B cell (primary cell): ENCODE measurements at regions of chr2 and their contacts with region 1.

Region 1: GRCh38 chr2:134282629-134283400 is 28.9 kb downstream of the MGAT5 start:
- DNase-seq: peak; percentile 56
- ATAC-seq: peak; percentile 64
- H3K4me3 ChIP-seq: peak overlapping the region in 1 of 5 experiments; percentile 40
- H3K4me3 Mint-ChIP-seq: peak overlapping the region; percentile 77
- H3K27ac ChIP-seq: peak overlapping the region; percentile 56 to 80
- H3K27ac Mint-ChIP-seq: peak overlapping the region; percentile 88
- H3K4me1 ChIP-seq: peaks cover 95 to 100% of the 10 kb centered on the region in 2 donors
- H3K4me1 Mint-ChIP-seq: peaks cover 78% of the 10 kb centered on the region
- H3K27me3 ChIP-seq: no peaks in the 10 kb centered on the region
- H3K27me3 Mint-ChIP-seq: no peaks in the 10 kb centered on the region
- CTCF ChIP-seq: no peak

Region 2: GRCh38 chr2:134268265-134268664 is 14.6 kb before region 1 on chr2:
- CTCF ChIA-PET with region 1: interaction called, 17 read pairs
- POLR2A ChIA-PET with region 1: no interaction called
- intact Hi-C with region 1: no loop called
- DNase-seq: no peak
- ATAC-seq: no peak
- H3K4me3 ChIP-seq: no peak overlapping the region
- H3K4me3 Mint-ChIP-seq: peak overlapping the region; percentile 69
- H3K27ac ChIP-seq: peak overlapping the region; percentile 51 to 80
- H3K27ac Mint-ChIP-seq: peak overlapping the region; percentile 89
- H3K4me1 ChIP-seq: peaks cover 92 to 93% of the 10 kb centered on the region in 2 donors
- H3K4me1 Mint-ChIP-seq: peaks cover 86% of the 10 kb centered on the region
- H3K27me3 ChIP-seq: no peaks in the 10 kb centered on the region
- H3K27me3 Mint-ChIP-seq: no peaks in the 10 kb centered on the region
- CTCF ChIP-seq: no peak

Region 3: GRCh38 chr2:134314681-134315368 is 32.0 kb after region 1 on chr2:
- CTCF ChIA-PET with region 1: no interaction called
- POLR2A ChIA-PET with region 1: no interaction called
- intact Hi-C with region 1: no loop called
- DNase-seq: no peak
- ATAC-seq: no peak
- H3K4me3 ChIP-seq: no peak overlapping the region
- H3K4me3 Mint-ChIP-seq: no peak overlapping the region
- H3K27ac ChIP-seq: peak overlapping the region in 1 of 2 donors; percentile 42
- H3K27ac Mint-ChIP-seq: peak overlapping the region; percentile 58
- H3K4me1 ChIP-seq: peaks cover 55 to 57% of the 10 kb centered on the region in 2 donors
- H3K4me1 Mint-ChIP-seq: peaks cover 81% of the 10 kb centered on the region
- H3K27me3 ChIP-seq: no peaks in the 10 kb centered on the region
- H3K27me3 Mint-ChIP-seq: no peaks in the 10 kb centered on the region
- CTCF ChIP-seq: no peak

Region 4: DNA sequence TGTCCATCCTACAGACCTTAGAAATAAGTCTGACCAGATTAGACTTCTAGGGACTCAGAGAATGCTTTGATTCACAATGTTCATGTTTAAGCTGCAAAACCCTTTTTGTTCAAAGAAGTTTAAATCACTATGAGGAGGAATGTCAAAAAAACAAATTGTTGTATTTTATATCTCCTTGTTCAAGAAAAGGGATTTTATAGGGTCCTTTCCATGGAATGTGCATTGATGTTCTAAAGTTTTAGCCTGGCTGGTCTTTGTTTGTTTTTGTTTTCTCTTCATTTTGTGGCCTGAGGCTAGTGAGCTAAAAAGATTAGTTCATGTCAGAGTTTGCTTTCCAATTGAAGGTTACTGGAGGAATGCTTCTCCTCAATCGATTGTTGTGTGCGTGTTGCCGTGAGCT is 48.3 kb after region 1 on chr2:
- CTCF ChIA-PET with region 1: interaction called, 3 read pairs
- POLR2A ChIA-PET with region 1: no interaction called
- intact Hi-C with region 1: loop called (anchors 2 kb)
- DNase-seq: no peak
- ATAC-seq: no peak
- H3K4me3 ChIP-seq: no peak overlapping the region
- H3K4me3 Mint-ChIP-seq: no peak overlapping the region
- H3K27ac ChIP-seq: peak overlapping the region in 1 of 2 donors; percentile 11
- H3K27ac Mint-ChIP-seq: peak overlapping the region; percentile 46
- H3K4me1 ChIP-seq: peaks cover 31 to 32% of the 10 kb centered on the region in 2 donors
- H3K4me1 Mint-ChIP-seq: peaks cover 57% of the 10 kb centered on the region
- H3K27me3 ChIP-seq: no peaks in the 10 kb centered on the region
- H3K27me3 Mint-ChIP-seq: no peaks in the 10 kb centered on the region
- CTCF ChIP-seq: no peak

Region 5: DNA sequence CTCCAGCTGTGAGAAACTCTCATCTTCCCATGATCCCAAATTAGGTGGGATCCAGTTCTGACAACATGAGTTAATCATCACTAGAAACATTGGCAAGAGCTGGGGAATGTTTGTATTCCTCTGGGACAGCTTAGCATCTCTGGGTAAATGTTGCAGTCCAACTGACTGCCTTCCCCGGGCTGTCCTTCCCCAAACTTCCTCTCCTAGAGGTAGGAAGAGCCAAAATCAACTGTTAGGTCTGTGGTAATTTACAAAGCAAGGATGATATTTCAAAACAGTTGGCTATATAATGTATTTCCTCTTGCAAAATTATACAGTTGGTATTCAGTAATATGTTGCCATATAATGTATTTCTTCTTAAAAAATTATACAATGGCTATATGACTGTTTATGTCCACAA is 119.6 kb after region 1 on chr2:
- CTCF ChIA-PET with region 1: no interaction called
- POLR2A ChIA-PET with region 1: no interaction called
- intact Hi-C with region 1: no loop called
- DNase-seq: no peak
- ATAC-seq: no peak
- H3K4me3 ChIP-seq: no peak overlapping the region
- H3K4me3 Mint-ChIP-seq: no peak overlapping the region
- H3K27ac ChIP-seq: peak overlapping the region in 1 of 2 donors; percentile 51
- H3K27ac Mint-ChIP-seq: peak overlapping the region; percentile 46
- H3K4me1 ChIP-seq: peaks cover 0 to 7% of the 10 kb centered on the region in 2 donors
- H3K4me1 Mint-ChIP-seq: peaks cover 20% of the 10 kb centered on the region
- H3K27me3 ChIP-seq: no peaks in the 10 kb centered on the region
- H3K27me3 Mint-ChIP-seq: no peaks in the 10 kb centered on the region
- CTCF ChIP-seq: no peak